ENCODE measurements at regions of chr16 and their contacts with region 1.

Region 1: DNA sequence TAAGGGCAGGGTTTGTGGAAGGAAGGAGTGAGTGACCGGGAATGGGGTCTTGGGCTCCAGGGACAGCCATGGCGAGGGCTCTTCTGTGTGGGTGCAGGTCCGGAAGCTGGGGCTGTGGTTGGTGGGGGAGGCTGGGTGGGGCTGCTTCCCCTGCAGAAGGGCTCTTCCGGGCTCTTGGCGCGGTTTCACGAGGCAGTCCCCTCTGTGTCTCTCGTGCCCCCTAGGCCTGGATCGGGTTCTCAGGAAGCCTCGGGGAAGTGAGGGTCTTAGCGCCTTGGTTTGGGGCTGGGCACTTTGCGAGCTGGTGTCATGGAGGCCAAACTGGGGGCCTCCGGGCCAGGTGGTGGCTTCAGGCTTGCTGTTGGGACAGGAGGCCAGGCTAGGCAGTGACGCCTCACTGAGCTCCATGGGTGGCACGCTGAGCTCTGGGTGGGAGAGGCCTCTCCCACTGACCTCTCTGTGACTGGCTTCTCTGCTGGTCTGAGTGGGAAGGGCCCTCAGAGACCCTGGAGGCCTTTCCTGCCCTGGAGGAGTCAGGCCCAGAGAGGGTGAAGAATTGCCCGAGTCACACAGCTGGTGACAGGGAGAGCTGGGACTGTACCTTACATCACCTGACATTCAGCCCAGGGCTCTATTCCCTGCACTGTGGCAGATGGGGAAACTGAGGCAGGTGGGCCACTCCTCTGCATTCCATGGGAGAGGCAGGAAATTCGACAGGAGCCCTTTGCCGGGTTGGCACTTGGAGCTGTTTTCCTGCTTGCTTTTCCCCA is 8.2 kb downstream of the ADCY7 start:
- H3K4me3 Mint-ChIP-seq: peak overlapping the region; percentile 96
- H3K27ac Mint-ChIP-seq: peak overlapping the region; percentile 90
- H3K4me1 Mint-ChIP-seq: peaks cover 91% of the 10 kb centered on the region
- H3K27me3 Mint-ChIP-seq: no peaks in the 10 kb centered on the region

Region 2: DNA sequence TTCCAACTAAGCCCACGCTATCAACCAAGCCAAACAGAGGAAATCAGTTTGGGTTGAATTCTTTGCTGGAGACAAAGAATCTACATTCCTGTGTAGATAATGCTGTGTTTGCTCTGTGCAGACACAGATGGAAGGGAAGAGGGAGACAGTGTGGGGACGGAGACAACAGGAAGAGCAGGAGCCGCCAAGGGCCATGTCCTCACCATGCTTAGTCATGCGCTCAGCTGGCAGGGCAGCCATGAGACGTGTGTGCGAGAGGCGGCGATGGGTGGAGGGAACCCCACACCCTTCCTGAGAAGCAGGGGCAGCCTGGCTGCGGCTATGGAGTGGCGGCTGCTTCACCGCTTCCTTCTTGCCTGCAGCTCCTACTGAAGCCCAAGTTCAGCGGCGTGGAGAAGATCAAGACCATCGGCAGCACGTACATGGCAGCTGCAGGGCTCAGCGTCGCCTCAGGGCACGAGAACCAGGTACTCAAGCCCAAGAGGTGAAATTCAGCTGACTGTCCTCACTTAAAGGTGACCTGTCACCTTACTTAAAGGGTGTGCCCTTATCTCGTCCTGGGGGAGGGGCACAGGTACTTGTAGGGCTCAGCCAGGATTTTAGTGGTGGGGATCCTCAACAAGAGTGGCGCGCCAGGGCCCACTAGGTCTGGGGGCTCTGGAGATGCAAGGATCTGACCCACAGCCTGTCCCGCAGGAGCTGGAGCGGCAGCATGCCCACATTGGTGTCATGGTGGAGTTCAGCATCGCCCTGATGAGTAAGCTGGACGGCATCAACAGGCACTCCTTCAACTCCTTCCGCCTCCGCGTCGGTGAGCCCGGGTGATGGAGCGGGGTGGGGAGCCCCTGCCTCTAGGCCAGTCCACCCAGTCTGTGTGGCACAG is 39.3 kb after region 1 on chr16:
- intact Hi-C with region 1: loop called (anchors 5 kb)
- H3K4me3 Mint-ChIP-seq: peak overlapping the region; percentile 69
- H3K27ac Mint-ChIP-seq: peak overlapping the region; percentile 67
- H3K4me1 Mint-ChIP-seq: peaks cover 83% of the 10 kb centered on the region
- H3K27me3 Mint-ChIP-seq: no peaks in the 10 kb centered on the region

Measured in dendritic cell treated with granulocyte-macrophage colony-stimulating factor and Interleukin-4, amounts not matched to agents 40 ng/mL and 50 ng/mL, for 4 days (primary cell).